ENCODE measurements at regions of chrX and their contacts with region 1.

Region 1: GRCh38 chrX:15737960-15738902 is at the start of gene CA5B:
- DNase-seq: peak; percentile 93 to 100 (median 96)
- ATAC-seq: peak; percentile 96
- H3K4me3 ChIP-seq: peak within 1 kb of the TSS; percentile 84 to 85
- H3K4me3 Mint-ChIP-seq: peak within 1 kb of the TSS; percentile 94
- H3K27ac ChIP-seq: peak within 1 kb of the TSS; percentile 76 to 81
- H3K27ac Mint-ChIP-seq: peak within 1 kb of the TSS; percentile 92
- H3K4me1 ChIP-seq: peaks cover 23% of the 10 kb centered on the region
- H3K4me1 Mint-ChIP-seq: peaks cover 41% of the 10 kb centered on the region
- H3K27me3 ChIP-seq: no peaks in the 10 kb centered on the region
- H3K27me3 Mint-ChIP-seq: no peaks in the 10 kb centered on the region
- CTCF ChIP-seq: no peak
- total RNA-seq, gene CA5B: 33.9 to 35.2 TPM

Region 2: DNA sequence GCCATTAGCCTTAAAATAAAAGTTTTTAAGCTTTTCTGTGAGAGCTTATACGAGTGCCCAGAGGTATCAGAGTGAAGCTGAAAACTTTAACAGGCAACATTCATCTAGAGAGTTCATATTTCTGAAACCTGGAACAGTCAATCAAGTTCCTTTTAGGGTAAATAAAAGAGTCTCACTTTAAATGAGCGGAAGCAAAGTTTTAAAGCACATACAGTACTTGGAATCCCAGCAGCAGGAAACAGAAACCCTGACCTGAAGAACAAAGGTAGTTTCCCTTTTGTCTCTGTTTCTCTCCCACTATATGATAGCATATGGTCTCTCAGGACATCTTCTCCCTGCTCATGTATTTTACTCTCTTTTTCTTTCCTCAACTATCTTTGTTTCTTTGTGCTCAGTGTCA is 621.3 kb before region 1 on chrX:
- CTCF ChIA-PET with region 1: no interaction called
- POLR2A ChIA-PET with region 1: no interaction called
- intact Hi-C with region 1: no loop called
- DNase-seq: no peak
- ATAC-seq: no peak
- H3K4me3 ChIP-seq: no peak overlapping the region
- H3K4me3 Mint-ChIP-seq: no peak overlapping the region
- H3K27ac ChIP-seq: no peak overlapping the region
- H3K27ac Mint-ChIP-seq: no peak overlapping the region
- H3K4me1 ChIP-seq: no peaks in the 10 kb centered on the region
- H3K4me1 Mint-ChIP-seq: no peaks in the 10 kb centered on the region
- H3K27me3 ChIP-seq: no peaks in the 10 kb centered on the region
- H3K27me3 Mint-ChIP-seq: no peaks in the 10 kb centered on the region
- CTCF ChIP-seq: no peak

Region 3: DNA sequence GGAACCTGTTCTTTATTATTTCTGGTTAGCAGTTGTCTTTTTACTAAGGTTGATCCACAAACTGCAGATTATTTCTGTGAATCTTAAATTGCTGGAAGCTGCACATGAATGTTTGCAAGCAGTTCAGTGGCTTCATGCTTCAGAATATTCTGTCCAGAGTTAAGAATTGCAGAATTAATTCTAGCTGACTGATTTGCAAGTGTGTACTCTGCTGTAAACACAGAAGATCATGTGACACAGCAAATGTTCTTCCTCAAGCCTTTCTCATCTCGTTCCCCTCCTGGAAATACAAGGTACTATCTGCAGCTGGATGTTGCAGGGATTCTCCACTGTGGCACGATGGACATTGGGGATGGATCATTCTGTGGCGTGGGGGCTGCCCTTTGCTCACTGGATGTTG is 56.8 kb before region 1 on chrX:
- CTCF ChIA-PET with region 1: no interaction called
- POLR2A ChIA-PET with region 1: no interaction called
- intact Hi-C with region 1: no loop called
- DNase-seq: no peak
- ATAC-seq: no peak
- H3K4me3 ChIP-seq: no peak overlapping the region
- H3K4me3 Mint-ChIP-seq: no peak overlapping the region
- H3K27ac ChIP-seq: no peak overlapping the region
- H3K27ac Mint-ChIP-seq: no peak overlapping the region
- H3K4me1 ChIP-seq: peaks cover 4% of the 10 kb centered on the region
- H3K4me1 Mint-ChIP-seq: peaks cover 27% of the 10 kb centered on the region
- H3K27me3 ChIP-seq: no peaks in the 10 kb centered on the region
- H3K27me3 Mint-ChIP-seq: no peaks in the 10 kb centered on the region
- CTCF ChIP-seq: no peak

Region 4: DNA sequence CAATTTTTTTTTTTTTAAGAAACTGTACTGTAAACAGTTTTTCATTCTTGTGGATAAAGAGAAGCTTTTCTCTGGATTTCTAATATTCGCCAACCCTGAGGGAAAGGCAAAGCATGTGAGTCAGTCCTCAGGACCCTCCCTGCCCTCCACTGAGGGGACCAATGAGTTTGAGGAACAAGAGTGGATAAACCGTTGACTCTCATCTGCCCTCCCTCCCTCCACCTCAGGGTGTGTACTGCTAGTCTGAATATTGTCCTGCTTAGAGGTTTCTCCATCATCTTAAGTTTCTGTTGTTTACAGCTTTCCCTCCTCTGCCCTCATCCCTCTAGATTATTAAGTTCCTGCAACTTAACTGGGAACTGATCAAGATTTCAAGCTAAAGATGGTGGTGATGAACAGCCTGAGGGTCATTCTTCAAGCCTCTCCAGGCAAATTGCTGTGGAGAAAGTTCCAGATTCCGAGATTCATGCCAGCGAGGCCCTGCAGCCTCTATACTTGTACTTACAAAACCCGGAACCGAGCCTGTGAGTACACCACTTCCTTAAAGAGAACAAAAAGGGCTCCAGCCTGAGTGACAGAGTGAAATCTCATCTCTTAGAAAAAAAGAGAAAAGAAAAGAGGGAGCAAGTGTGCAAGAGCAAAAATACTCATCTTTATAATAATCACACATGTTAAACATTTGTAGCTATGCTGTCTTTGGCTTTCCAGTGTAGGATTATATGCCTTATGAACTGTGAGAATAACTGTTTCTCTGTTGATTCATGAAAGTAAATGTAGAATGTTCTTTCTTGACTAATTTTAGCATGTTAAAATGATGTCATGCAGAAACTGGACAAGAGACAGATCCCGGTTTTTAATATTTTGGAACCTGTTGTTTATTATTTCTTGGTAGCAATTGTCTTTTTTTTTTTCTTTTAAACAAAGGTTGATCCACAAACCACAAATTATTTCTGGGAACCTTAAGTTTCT is 11.7 kb after region 1 on chrX:
- CTCF ChIA-PET with region 1: interaction called, 30 read pairs
- POLR2A ChIA-PET with region 1: interaction called, 22 read pairs
- intact Hi-C with region 1: loop called in 1 of 2 experiments (anchors 1 kb)
- DNase-seq: peak in 6 of 9 experiments; percentile 24 to 68 (median 42)
- ATAC-seq: peak; percentile 59
- H3K4me3 ChIP-seq: peak overlapping the region; percentile 13 to 17
- H3K4me3 Mint-ChIP-seq: peak overlapping the region; percentile 72
- H3K27ac ChIP-seq: peak overlapping the region; percentile 94 to 99
- H3K27ac Mint-ChIP-seq: peak overlapping the region; percentile 97
- H3K4me1 ChIP-seq: peaks cover 59% of the 10 kb centered on the region
- H3K4me1 Mint-ChIP-seq: peaks cover 77% of the 10 kb centered on the region
- H3K27me3 ChIP-seq: no peaks in the 10 kb centered on the region
- H3K27me3 Mint-ChIP-seq: no peaks in the 10 kb centered on the region
- CTCF ChIP-seq: no peak

Measured in CD8-positive, alpha-beta T cell (primary cell).